PC-9 (cell line): ENCODE measurements at regions of chr4 and their contacts with region 1.

Region 1: GRCh38 chr4:118367872-118368271 is 15.1 kb upstream of the PRSS12 start:
- DNase-seq: no peak
- H3K4me3 ChIP-seq: no peak overlapping the region
- H3K27ac ChIP-seq: no peak overlapping the region
- H3K4me1 ChIP-seq: no peaks in the 10 kb centered on the region
- H3K27me3 ChIP-seq: no peaks in the 10 kb centered on the region
- CTCF ChIP-seq: no peak

Region 2: DNA sequence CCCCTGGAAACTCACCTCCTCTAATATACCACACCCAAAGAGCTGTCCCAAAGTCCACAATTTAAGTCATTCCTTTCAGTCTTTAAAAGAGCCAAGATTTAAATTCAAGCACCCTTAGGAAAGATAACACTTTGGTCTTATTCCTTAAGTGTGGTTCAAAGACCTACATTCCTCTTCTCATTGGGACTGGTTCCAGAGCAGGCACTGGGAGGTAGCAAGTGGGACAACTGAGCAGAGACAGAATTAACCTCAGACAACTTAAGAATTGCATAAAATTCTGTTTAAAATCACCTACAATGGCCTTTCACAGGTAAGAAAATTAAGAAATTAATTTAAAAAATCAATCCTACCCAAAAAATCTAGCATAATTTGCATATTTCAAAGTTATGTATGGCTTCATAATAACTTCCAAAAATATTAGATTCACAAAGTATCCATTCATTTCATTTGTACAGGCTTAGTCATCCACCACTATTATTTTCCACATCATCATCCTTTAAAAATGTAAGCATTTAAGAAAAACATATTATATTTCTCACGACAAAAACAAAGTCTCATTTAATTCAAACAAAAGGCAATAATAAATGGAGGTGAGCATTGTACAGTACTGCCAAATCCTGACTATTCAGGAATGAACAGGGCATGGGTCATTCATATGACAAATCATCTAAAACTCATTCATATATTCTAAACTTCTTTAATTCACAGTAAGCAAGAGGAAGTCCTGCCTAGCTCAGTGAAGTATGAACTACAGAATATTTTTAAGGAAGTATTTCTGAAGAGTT is 28.7 kb before region 1 on chr4:
- CTCF ChIA-PET with region 1: no interaction called
- POLR2A ChIA-PET with region 1: interaction called, 10 read pairs
- intact Hi-C with region 1: no loop called
- DNase-seq: no peak
- H3K4me3 ChIP-seq: no peak overlapping the region
- H3K27ac ChIP-seq: no peak overlapping the region
- H3K4me1 ChIP-seq: no peaks in the 10 kb centered on the region
- H3K27me3 ChIP-seq: no peaks in the 10 kb centered on the region
- CTCF ChIP-seq: no peak

Region 3: DNA sequence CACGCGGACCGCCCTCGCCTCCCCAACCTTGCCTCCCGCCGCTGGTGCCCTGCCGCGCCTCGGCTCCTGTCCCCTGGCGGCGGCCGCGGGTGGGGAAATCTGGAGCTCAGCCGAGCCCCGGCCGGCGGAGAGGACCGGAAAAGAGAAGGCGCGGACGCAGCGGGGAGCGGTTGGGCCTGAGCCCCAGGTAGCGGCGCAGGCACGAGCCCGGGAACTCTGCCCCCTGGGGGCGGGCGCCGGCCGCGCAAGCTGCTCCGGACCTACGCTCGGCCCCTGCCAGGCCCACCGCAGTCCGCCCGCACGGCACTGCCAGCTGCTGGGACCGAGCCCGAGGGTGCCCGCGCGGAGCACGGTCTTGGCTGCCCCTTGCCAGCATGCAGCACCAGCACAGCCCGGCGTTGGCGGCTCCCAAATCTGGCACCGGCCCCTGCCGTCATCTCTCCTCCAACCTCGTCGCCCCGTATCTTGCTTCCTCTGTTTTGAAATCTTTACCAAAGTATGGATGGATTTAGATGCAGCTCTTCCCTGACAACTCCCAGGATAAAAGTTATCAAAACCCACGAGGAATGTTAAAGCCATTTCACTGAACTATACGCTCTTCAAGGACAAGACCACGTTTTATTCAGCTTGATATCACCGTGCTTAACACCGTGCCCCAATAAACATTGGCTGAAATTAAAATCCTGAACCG is 14.9 kb before region 1 on chr4 and contains the start of gene PRSS12:
- CTCF ChIA-PET with region 1: no interaction called
- POLR2A ChIA-PET with region 1: interaction called, 17 read pairs
- intact Hi-C with region 1: no loop called
- DNase-seq: peak in 1 of 2 experiments; percentile 76
- H3K4me3 ChIP-seq: peak within 1 kb of the TSS; percentile 59; the same call in 1 of the 2 replicates
- H3K27ac ChIP-seq: no peak within 1 kb of the TSS
- H3K4me1 ChIP-seq: peaks cover 5% of the 10 kb centered on the region
- H3K27me3 ChIP-seq: no peaks in the 10 kb centered on the region
- CTCF ChIP-seq: peak; percentile 62
- total RNA-seq, gene PRSS12: 9.6 and 11.3 TPM in 2 replicates